ENCODE measurements at regions of chr12 and their contacts with region 1.

Region 1: DNA sequence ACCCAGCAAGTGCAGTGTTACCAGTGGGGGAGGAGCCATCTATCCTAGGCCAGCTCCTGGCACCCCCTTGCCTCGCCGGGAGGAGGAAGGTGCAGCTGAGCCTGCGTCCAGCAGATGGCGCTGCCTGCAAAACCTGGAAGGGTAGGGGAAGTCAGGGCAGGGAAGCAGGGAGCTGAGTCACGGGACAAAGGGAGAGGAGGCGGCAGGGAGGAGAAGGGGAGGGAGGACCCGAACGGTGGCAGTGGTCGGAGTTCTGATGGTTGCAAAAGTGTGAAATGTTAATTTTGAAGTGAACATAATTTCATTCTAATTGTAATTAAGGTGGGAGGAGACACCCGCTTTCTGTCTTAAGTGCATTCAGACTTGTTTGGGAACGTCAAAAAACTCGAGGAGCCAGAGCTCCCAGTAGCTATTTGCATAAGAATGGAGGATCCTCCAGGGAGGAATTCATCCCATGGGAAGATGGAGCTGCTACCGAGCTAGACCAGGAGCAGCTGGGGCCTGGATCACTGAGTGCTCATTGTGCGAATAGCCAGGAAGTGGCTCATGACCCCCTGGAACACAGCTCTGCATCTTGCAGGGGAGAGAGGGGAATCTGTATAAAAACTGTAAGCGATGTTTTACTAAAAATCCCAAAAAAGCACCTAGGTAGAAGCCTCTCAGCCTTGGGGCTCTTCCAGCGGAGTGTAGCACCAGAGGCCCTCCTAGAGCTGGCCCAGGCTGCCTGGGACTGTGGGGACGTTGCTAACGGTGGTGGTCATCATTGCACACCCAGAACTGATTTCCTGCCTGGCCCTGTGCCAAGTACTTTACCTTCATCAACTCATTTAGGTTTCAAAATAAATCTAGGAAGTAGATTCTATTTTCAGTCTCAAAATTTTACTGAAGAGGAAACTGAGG is 59.5 kb downstream of the EMP1 start:
- DNase-seq: peak; percentile 92
- ATAC-seq: peak; percentile 100
- H3K4me3 Mint-ChIP-seq: no peak overlapping the region
- H3K27ac Mint-ChIP-seq: no peak overlapping the region
- H3K4me1 Mint-ChIP-seq: peaks cover 3% of the 10 kb centered on the region
- H3K27me3 Mint-ChIP-seq: peaks cover 2% of the 10 kb centered on the region

Region 2: GRCh38 chr12:12916135-12916944 is 339.7 kb before region 1 on chr12:
- CTCF ChIA-PET with region 1: interaction called, 11 read pairs
- POLR2A ChIA-PET with region 1: no interaction called
- intact Hi-C with region 1: no loop called
- DNase-seq: peak; percentile 91
- ATAC-seq: peak; percentile 97
- H3K4me3 Mint-ChIP-seq: no peak overlapping the region
- H3K27ac Mint-ChIP-seq: no peak overlapping the region
- H3K4me1 Mint-ChIP-seq: peaks cover 7% of the 10 kb centered on the region
- H3K27me3 Mint-ChIP-seq: peaks cover 12% of the 10 kb centered on the region

Region 3: DNA sequence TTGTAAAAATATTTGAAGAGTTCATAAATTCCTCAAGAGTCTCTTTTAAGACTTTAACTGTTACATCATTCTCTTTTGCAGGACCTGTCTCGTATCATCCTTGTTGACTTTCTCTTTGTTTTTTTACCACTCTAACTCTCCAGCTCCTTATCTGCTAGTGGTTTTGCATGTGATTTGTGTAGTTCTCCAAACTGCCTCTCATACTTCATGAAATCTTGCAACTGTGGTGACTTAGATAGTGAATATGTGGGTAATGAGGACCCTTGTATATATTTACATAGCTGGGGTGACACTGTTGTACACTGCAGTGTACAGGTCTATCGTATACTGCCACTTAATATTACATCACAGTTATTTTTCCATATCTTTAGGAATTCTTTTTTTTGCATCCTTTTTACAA is 99.8 kb before region 1 on chr12:
- CTCF ChIA-PET with region 1: no interaction called
- POLR2A ChIA-PET with region 1: no interaction called
- intact Hi-C with region 1: no loop called
- DNase-seq: no peak
- ATAC-seq: no peak
- H3K4me3 Mint-ChIP-seq: no peak overlapping the region
- H3K27ac Mint-ChIP-seq: no peak overlapping the region
- H3K4me1 Mint-ChIP-seq: peaks cover 14% of the 10 kb centered on the region
- H3K27me3 Mint-ChIP-seq: peaks cover 2% of the 10 kb centered on the region

Region 4: DNA sequence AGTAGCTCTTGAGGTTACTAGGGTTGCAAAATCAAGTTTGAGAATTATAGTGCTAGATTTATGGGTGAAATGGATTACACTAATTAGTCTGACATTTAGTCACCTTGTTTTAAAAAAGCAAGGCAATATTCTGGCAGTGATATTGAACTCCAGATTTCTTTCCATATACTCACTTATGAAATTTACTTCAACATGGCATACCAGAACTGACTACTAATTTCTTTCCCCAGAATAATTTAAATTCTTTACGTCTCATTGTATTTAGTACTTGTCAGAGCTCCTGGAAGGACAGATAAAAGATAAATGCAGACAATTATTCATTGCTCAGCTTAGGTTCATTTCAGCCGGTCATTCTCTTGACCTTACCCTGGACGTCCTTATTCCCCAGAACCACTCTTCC is 35.2 kb before region 1 on chr12:
- CTCF ChIA-PET with region 1: interaction called, 10 read pairs
- POLR2A ChIA-PET with region 1: no interaction called
- intact Hi-C with region 1: no loop called
- DNase-seq: no peak
- ATAC-seq: no peak
- H3K4me3 Mint-ChIP-seq: no peak overlapping the region
- H3K27ac Mint-ChIP-seq: no peak overlapping the region
- H3K4me1 Mint-ChIP-seq: no peaks in the 10 kb centered on the region
- H3K27me3 Mint-ChIP-seq: peaks cover 8% of the 10 kb centered on the region

Region 5: DNA sequence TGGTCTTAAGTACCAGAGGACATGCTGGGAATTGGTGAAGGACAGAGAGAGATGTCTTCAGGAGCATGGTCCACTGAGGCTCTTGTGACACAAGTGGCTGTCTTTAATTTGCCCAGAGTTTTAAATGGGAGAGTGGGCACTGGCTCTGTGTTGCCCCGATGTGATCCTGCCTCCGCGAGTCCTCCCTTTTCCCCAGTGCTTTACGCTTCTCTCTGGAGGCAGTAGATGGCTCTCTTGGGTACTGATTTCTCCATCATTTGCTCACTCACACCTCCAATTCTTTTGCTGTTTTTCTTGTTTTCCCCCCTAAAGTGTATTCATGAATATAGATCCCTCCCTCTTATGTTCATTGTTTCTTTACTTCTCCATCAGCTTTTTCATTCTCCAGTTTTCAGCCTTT is 14.8 kb after region 1 on chr12:
- CTCF ChIA-PET with region 1: interaction called, 23 read pairs
- POLR2A ChIA-PET with region 1: no interaction called
- intact Hi-C with region 1: no loop called
- DNase-seq: no peak
- ATAC-seq: no peak
- H3K4me3 Mint-ChIP-seq: no peak overlapping the region
- H3K27ac Mint-ChIP-seq: no peak overlapping the region
- H3K4me1 Mint-ChIP-seq: no peaks in the 10 kb centered on the region
- H3K27me3 Mint-ChIP-seq: peaks cover 16% of the 10 kb centered on the region

Region 6: GRCh38 chr12:13534645-13535398 is 278.8 kb after region 1 on chr12:
- CTCF ChIA-PET with region 1: interaction called, 4 read pairs
- POLR2A ChIA-PET with region 1: no interaction called
- intact Hi-C with region 1: loop called in 1 of 2 experiments (anchors 1 kb)
- DNase-seq: peak; percentile 78
- ATAC-seq: no peak
- H3K4me3 Mint-ChIP-seq: no peak overlapping the region
- H3K27ac Mint-ChIP-seq: no peak overlapping the region
- H3K4me1 Mint-ChIP-seq: peaks cover 6% of the 10 kb centered on the region
- H3K27me3 Mint-ChIP-seq: peaks cover 17% of the 10 kb centered on the region

Region 7: GRCh38 chr12:14167005-14167628 is 911.1 kb after region 1 on chr12:
- CTCF ChIA-PET with region 1: interaction called, 13 read pairs
- POLR2A ChIA-PET with region 1: no interaction called
- intact Hi-C with region 1: loop called in 1 of 2 experiments (anchors 1 kb)
- DNase-seq: peak; percentile 50
- ATAC-seq: no peak
- H3K4me3 Mint-ChIP-seq: no peak overlapping the region
- H3K27ac Mint-ChIP-seq: no peak overlapping the region
- H3K4me1 Mint-ChIP-seq: no peaks in the 10 kb centered on the region
- H3K27me3 Mint-ChIP-seq: peaks cover 10% of the 10 kb centered on the region

Measured in activated CD4-positive, alpha-beta T cell treated with anti-CD3 and anti-CD28 coated beads for 36 hours (primary cell).